Mucosa of descending colon (tissue), 3 donors: ENCODE measurements at regions of chr5 and their contacts with region 1.

Region 1: DNA sequence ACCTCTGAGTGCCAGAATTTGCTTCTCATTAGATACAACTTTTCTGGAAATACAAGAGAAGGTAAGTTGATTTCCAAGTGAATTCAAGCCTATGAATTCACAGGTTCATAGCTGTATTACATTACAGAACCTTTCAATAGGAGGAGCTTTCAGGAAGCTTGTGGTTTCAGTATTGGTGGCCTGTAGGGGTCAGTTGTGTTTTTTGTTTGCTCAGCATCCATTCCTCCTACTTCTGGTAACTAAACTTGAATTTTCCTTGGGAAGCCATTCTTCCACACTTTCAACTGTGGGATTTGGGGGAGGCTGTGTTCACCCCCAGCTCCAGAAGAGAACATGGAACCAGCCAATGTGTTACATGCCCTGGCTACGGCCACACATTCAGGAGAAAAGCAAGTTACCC is 5.6 kb upstream of the CYSTM1 start:
- DNase-seq: no peak
- ATAC-seq: no peak
- H3K4me3 ChIP-seq: no peak overlapping the region
- H3K4me1 ChIP-seq: peaks cover 15% of the 10 kb centered on the region
- CTCF ChIP-seq: no peak

Region 2: GRCh38 chr5:140054086-140054689 is 115.2 kb before region 1 on chr5:
- intact Hi-C with region 1: no loop called
- DNase-seq: no peak
- ATAC-seq: no peak
- H3K4me3 ChIP-seq: no peak overlapping the region
- H3K4me1 ChIP-seq: no peaks in the 10 kb centered on the region
- CTCF ChIP-seq: no peak

Region 3: DNA sequence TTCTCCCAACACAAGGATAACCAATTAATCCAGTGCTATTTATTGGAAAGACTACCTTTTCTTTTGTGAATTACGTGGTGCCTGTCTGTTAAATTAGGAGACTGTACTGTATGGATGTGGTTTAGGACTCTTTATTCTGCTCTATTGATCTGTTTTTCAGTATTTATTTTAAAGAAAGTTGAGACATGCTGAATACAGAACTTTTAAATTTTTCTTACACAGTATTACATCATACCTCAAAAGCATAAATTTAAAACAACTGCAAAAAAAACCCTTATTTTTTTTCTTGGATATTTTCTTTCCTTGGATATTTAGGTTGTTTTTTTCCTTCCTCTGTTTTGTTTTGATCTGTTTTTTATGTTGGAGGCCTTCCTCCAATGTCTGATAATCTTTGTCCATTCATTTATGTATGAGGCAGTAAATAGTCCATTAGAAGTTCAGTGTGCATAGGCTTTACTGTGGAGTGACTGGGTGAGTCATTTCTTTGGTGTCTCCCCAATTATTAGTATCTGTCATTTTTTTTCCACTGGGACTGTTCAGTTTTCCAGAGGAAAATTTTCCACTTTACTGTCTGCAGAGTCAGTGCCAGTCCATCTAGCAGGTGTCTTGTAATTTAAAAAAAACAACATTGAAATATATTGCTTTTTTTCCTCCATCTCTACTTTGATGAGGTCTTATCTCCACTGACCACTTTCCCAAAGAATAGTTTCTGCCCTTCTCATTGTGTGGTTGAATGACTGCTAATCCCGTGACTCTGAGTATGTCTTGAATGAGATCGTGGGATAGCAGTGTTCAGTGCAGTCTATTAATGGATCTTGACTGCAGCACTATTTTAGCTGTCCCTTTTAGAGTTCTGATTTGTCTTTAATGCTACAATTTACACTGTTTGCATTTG is 20.8 kb after region 1 on chr5:
- intact Hi-C with region 1: no loop called
- DNase-seq: no peak
- ATAC-seq: no peak
- H3K4me3 ChIP-seq: no peak overlapping the region
- H3K4me1 ChIP-seq: peaks cover 26% of the 10 kb centered on the region
- CTCF ChIP-seq: no peak

Region 4: GRCh38 chr5:140214831-140215230 is 45.4 kb after region 1 on chr5:
- intact Hi-C with region 1: no loop called
- DNase-seq: no peak
- ATAC-seq: no peak
- H3K4me3 ChIP-seq: no peak overlapping the region
- H3K4me1 ChIP-seq: peaks cover 33% of the 10 kb centered on the region
- CTCF ChIP-seq: no peak

Region 5: DNA sequence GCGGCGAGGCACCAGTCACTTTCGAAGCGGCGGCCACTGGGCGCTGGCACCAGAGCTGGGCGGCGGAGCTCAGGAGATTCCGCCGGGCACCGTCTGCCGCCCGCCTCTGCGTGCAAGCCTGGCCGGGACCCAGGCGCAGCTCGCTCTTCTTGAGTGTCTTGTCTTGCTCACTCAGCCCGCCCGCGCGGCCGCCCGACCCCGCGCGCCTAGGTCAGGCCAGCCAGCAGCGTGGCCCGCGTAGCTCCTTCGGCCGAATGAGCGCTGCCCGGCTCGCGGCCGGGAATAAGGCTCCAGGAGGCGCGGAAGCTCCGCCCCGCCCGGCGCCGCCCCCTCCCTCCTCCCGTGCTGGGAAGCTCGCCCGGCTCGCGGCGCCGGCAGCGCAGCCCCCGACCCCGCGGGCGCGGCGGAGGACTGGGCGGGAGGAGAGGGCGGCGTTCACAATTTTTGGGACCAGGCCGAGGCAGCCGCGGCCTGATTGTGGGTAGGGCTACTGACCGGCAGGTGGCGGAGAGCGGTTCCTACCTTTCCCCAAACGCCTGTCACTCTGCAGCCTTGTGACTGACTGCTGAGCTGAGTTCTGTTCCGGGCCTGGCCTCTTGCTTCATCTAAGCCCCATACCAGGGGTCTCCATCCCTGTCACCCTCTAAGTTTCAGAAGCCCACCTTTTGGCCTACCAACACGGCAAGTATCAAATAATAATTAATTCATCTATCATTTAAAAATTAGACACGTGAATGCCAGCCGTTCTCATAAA is 177.1 kb after region 1 on chr5 and contains the start of gene HBEGF:
- intact Hi-C with region 1: loop called in 1 of 2 experiments (anchors 5 kb)
- DNase-seq: peak; percentile 88 to 91 (median 91)
- ATAC-seq: peak; percentile 78
- H3K4me3 ChIP-seq: peak within 1 kb of the TSS; percentile 57
- H3K4me1 ChIP-seq: peaks cover 32% of the 10 kb centered on the region
- CTCF ChIP-seq: no peak
- total RNA-seq, gene HBEGF: 8.8 to 15.7 (median 13.1) TPM